GM23248 (cell line): ENCODE measurements at regions of chr1 and their contacts with region 1.

Region 1: GRCh38 chr1:93304716-93305138 is 41.0 kb upstream of the DR1 start:
- DNase-seq: peak; percentile 80
- H3K4me3 ChIP-seq: no peak overlapping the region
- H3K27ac ChIP-seq: no peak overlapping the region
- H3K4me1 ChIP-seq: no peaks in the 10 kb centered on the region
- H3K27me3 ChIP-seq: no peaks in the 10 kb centered on the region

Region 2: DNA sequence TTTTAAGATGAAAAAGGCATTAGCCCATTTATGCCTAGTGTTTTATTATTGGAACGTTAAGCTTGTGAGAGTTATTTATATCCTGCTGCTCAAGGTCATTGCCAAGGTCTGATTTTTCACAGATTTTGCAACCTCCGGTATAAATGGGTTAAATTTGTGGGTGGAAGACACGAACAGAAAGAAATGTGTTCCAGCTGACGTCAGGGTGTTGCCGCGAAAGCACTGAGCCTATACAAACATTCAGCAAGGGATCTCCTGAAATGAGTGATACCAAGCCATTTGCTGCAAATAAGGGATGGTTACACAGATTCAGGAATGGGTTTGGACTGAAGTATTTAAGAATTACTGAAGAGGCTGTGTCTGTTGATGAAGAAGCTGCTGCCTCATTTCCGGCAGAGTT is 156.7 kb before region 1 on chr1:
- in situ Hi-C with region 1: no loop called
- DNase-seq: peak; percentile 54
- H3K4me3 ChIP-seq: no peak overlapping the region
- H3K27ac ChIP-seq: peak overlapping the region; percentile 33
- H3K4me1 ChIP-seq: peaks cover 18% of the 10 kb centered on the region; the same call in 1 of the 2 replicates
- H3K27me3 ChIP-seq: no peaks in the 10 kb centered on the region

Region 3: DNA sequence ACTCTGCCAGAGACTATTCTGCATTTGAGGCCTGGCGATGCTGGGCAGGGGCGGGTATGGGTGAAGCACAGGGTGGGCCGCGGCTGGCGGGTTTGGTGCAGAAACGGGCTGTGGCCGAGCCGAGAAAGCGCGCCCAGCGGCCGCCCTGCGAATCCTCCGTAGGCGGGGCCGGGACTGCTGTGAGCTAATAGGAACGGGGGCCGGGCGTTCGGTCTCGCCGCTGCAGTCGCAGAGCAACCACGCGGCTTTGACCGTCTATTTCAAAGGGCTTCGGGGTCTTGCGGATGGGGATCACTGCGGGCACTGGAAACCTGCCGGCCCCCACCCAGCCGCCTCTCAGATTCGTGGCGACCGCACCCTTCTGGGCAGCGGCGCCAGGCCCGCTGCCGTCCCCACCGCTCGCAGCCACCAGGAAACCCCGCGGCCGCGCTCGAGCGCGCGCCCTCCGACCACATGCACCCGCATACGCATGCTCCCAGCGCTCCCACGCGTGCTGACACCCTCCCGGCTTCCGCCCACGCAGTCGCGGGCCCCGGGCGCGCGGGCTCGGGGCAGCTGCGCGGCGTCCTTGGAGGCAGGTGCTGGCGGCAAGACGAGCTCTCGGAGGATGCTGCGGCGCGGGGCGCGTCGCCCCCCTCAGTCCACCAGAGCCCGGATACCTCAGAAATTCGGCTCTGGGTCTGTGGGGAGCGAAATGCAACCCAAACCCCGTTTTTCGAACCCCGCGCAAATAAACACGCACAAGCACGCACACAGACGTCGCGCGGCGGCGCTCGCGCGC is 541.7 kb after region 1 on chr1:
- in situ Hi-C with region 1: loop called (anchors 25 kb)
- DNase-seq: peak; percentile 96
- H3K4me3 ChIP-seq: peak overlapping the region; percentile 94
- H3K27ac ChIP-seq: peak overlapping the region; percentile 98
- H3K4me1 ChIP-seq: peaks cover 39% of the 10 kb centered on the region
- H3K27me3 ChIP-seq: no peaks in the 10 kb centered on the region